K562 (cell line): ENCODE measurements at regions of chr9 and their contacts with region 1.

Region 1: GRCh38 chr9:33178971-33179697 is 12.0 kb upstream of the B4GALT1 start:
- DNase-seq: no peak
- ATAC-seq: peak; percentile 88
- H3K4me3 ChIP-seq: no peak overlapping the region
- H3K27ac ChIP-seq: no peak overlapping the region
- H3K4me1 ChIP-seq: no peaks in the 10 kb centered on the region
- H3K27me3 ChIP-seq: no peaks in the 10 kb centered on the region
- CTCF ChIP-seq: peak in 2 of 3 experiments; percentile 17 to 43; a peak in 2 of 6 replicates
- EP300 ChIP-seq: no peak
- POLR2A ChIP-seq: no peak
- RAD21 ChIP-seq: peak; percentile 42 to 54; a peak in 3 of 4 replicates

Region 2: DNA sequence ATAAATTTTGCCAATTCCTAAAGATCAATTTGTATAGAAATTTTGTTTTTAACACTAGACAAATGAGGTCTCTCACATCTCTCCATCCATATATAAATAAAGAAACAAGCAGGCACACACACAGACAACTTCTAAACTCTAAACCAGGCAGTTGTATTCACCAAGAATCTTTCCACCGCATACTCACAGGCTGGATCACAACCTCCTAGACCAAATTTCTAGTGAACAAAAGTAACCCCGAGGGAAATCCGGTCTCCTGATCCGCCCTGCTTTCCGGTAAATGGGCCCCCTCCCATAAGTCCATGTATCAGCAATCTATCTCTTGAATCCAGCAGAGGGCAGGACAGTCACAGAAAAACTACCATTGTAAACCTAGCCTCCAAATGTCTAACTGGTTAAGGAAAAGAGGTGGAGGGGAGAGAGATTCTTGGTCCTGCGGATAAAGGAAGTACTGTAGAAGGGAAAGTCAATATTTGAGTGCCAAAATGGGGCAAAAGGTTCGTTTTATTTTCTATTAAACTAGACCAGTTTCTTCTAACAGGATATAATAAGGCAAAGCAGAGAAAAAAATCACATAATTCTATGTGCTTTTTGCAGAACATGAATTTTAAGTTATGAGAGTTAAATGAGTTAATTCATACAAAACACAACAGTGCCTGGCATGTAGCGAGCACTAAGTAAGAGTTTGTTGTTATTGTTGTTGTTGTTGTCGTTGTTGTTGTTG is 97.8 kb before region 1 on chr9:
- CTCF ChIA-PET with region 1: interaction called, 8 read pairs
- POLR2A ChIA-PET with region 1: interaction called, 4 read pairs
- in situ Hi-C with region 1: no loop called
- intact Hi-C with region 1: loop called (anchors 1 kb)
- DNase-seq: peak; percentile 47 to 83 (median 65)
- ATAC-seq: peak; percentile 84
- H3K4me3 ChIP-seq: no peak overlapping the region
- H3K27ac ChIP-seq: no peak overlapping the region; the same call in 2 of the 3 replicates
- H3K4me1 ChIP-seq: peaks cover 0 to 6% of the 10 kb centered on the region in 2 experiments; a peak in 3 of 5 replicates
- H3K27me3 ChIP-seq: no peaks in the 10 kb centered on the region
- CTCF ChIP-seq: peak; percentile 69 to 81 (median 76)
- EP300 ChIP-seq: no peak
- POLR2A ChIP-seq: no peak
- RAD21 ChIP-seq: peak; percentile 91 to 93

Region 3: DNA sequence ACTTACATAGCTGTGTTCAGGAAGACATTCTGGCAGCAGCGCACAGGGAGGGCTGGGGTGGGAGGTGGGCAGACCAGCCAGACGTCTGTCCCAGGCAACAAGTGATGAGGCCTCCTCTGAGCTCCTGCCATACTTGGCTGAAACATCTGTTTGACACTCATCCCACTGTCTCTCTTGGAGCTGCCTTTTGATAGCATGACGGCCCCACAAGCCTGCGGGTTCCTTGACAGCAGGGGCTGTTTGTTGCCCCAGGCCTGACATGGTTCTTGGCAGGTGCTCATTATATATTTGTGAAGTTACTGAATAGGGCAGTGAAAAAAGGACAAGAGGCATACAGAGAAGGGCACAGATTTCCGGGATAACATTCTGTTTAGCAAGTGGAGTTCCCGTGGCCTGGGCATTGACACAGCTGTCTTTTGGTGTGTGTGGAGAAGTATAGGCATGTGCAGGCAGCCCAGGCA is 10.2 kb after region 1 on chr9:
- CTCF ChIA-PET with region 1: no interaction called
- POLR2A ChIA-PET with region 1: no interaction called
- in situ Hi-C with region 1: no loop called
- intact Hi-C with region 1: no loop called
- DNase-seq: no peak
- ATAC-seq: no peak
- H3K4me3 ChIP-seq: no peak overlapping the region
- H3K27ac ChIP-seq: no peak overlapping the region
- H3K4me1 ChIP-seq: peaks cover 10 to 19% of the 10 kb centered on the region in 2 experiments; a peak in 3 of 5 replicates
- H3K27me3 ChIP-seq: no peaks in the 10 kb centered on the region
- CTCF ChIP-seq: no peak
- EP300 ChIP-seq: no peak
- POLR2A ChIP-seq: no peak
- RAD21 ChIP-seq: no peak